Endothelial cell of umbilical vein (primary cell): ENCODE measurements at regions of chr20 and their contacts with region 1.

Region 1: DNA sequence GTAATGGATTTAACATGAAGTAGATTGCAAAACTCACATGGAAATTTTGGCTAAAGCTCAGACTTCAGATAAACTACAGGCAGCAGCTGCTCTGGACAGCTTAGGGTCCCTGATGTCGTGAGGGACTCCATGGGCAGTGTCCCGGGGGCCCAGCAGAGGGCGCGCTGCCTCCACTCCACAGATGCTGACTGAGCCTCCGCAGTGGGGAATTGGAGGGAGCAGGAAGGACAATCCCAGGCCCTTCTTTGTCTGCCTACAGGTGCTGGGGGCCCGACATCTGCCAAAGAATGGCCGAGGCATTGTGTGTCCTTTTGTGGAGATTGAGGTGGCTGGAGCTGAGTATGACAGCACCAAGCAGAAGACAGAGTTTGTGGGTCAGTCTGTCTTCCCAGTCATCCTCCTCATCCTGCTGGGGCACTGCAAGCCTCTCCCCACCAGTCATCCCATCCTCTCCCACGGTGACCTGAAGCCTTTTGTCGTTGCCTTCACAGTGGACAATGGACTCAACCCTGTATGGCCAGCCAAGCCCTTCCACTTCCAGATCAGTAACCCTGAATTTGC is 35.9 kb downstream of the PLCG1 start:
- DNase-seq: peak; percentile 70
- H3K4me3 ChIP-seq: no peak overlapping the region
- H3K27ac ChIP-seq: no peak overlapping the region
- H3K4me1 ChIP-seq: peaks cover 7% of the 10 kb centered on the region
- H3K27me3 ChIP-seq: no peaks in the 10 kb centered on the region
- CTCF ChIP-seq: peak; percentile 94 to 96
- POLR2A ChIP-seq: no peak

Region 2: DNA sequence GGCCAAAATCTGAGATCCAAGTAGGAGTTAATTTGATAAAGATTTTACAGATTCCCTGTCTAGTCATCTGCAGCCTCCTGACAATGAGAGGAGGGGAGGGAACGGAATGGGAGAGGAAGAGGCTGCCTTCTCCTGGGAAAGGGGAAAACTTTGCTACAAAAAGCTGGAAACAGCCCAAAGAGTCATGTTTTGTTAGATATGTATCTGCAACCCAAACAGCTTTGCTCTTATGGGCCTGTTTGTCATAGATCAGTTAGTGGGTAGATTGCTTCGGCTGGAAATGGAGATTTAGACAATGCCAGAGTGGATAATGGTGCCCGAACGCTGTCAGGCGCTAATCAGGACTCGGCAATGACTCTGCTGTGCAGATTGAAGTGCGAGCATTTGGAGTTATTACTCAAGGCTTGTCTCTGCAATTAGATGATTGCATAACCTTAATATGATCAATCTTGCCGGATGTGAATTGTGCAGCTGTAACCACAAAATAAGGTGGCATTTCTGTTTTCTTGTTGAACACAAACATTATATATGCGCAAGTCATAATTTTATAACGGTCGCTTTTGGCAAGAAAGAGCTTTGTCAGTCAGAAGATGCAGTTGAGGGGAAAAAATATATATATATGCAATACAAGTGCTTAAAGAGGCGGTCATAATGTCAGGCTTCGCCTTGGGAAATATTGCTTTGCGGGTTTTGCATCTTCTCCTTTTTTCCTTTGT is 391.8 kb before region 1 on chr20:
- CTCF ChIA-PET with region 1: no interaction called
- POLR2A ChIA-PET with region 1: no interaction called
- dilution Hi-C with region 1: no loop called
- intact Hi-C with region 1: no loop called
- DNase-seq: no peak
- H3K4me3 ChIP-seq: no peak overlapping the region
- H3K27ac ChIP-seq: no peak overlapping the region
- H3K4me1 ChIP-seq: no peaks in the 10 kb centered on the region
- H3K27me3 ChIP-seq: peaks cover 3 to 5% of the 10 kb centered on the region in 2 experiments
- CTCF ChIP-seq: no peak
- POLR2A ChIP-seq: no peak

Region 3: DNA sequence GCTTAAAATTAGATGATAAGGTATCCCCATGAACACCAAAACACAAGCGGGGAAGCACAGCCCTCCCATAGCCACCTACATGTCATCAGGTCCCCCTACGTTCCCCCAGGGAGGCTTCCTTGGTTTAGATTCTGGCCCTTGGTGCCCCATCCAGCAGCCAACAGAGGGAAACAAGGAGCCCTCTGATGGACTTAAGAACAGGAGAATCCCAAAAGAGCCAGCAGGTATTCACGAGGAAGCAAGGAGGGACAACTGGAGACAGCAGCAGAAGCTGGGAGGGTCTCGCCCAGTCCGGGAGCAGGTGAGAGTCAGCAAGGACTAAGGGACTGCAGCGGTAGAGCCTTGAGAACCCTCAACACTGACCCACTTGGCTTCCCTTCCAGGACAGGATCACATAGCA is 203.0 kb before region 1 on chr20:
- CTCF ChIA-PET with region 1: interaction called, 3 read pairs
- POLR2A ChIA-PET with region 1: no interaction called
- dilution Hi-C with region 1: no loop called
- intact Hi-C with region 1: loop called (anchors 1 kb)
- DNase-seq: no peak
- H3K4me3 ChIP-seq: no peak overlapping the region
- H3K27ac ChIP-seq: no peak overlapping the region
- H3K4me1 ChIP-seq: no peaks in the 10 kb centered on the region
- H3K27me3 ChIP-seq: no peaks in the 10 kb centered on the region
- CTCF ChIP-seq: peak in 1 of 2 donors; percentile 16
- POLR2A ChIP-seq: no peak

Region 4: DNA sequence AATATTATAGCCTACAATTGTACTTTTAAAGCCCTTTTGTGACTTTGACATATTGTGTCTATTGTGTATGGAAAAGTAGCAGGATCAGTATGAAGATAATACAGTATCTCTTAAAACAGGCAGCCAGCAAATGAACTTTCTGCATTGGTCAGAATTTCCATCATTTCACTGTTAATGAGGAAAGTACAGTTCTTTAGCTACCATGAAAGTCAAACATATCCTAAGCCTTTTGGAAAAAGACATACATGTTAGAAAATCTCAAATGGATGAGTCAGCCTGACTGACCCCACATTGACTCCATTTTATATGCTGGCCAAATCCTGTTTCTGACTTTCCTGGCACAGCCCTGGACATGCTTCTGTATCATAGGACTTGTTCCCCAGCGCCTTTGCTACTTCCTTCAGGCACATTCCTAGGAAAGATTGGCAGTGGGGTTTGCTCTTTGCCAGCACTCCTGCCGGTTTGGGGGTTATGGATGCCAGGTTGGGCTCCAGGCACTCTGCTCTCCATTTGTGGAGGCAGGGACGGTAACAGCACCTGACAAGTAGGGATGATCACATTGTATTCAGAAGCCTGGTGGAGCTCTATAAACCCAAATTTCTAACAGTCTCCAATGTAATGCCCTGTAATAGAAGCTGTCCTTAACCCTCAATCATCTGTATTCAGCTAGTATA is 100.9 kb before region 1 on chr20:
- CTCF ChIA-PET with region 1: no interaction called
- POLR2A ChIA-PET with region 1: no interaction called
- dilution Hi-C with region 1: no loop called
- intact Hi-C with region 1: no loop called
- DNase-seq: peak; percentile 93
- H3K4me3 ChIP-seq: peak overlapping the region in 1 of 3 experiments; percentile 30
- H3K27ac ChIP-seq: peak overlapping the region; percentile 83
- H3K4me1 ChIP-seq: peaks cover 68% of the 10 kb centered on the region
- H3K27me3 ChIP-seq: no peaks in the 10 kb centered on the region
- CTCF ChIP-seq: no peak
- POLR2A ChIP-seq: no peak

Region 5: DNA sequence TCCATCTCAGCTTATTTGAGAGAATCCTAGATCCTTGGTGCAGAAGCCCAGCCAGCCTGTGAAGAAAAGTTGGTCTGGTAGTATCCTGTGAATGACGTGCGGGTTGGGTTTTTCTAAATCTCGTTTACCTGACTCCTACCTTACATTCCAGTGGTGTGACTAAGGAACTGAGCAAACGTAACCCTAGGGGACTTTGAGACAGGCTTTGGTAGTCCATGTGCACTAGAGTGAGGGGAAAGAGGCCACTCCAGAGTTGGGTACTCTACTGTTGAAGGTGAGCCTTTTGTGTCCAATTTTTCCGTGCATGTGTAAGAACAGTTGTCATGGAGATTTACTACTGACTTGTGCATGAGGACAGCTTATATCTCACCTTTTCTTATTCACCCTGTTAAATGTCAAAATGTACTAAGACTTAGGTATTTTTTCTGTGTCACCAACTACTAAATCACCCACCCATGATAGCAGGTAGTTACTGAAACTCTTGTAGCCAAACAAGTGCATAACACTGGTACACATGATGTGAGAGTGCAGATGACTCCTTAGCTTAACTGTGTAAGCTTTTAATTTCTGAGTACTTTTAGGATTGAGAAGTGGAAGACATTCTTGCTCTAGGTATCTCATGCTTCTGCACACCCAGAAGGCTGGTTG is 62.2 kb before region 1 on chr20:
- CTCF ChIA-PET with region 1: no interaction called
- POLR2A ChIA-PET with region 1: no interaction called
- dilution Hi-C with region 1: no loop called
- intact Hi-C with region 1: no loop called
- DNase-seq: no peak
- H3K4me3 ChIP-seq: no peak overlapping the region
- H3K27ac ChIP-seq: no peak overlapping the region
- H3K4me1 ChIP-seq: no peaks in the 10 kb centered on the region
- H3K27me3 ChIP-seq: no peaks in the 10 kb centered on the region
- CTCF ChIP-seq: no peak
- POLR2A ChIP-seq: no peak

Region 6: DNA sequence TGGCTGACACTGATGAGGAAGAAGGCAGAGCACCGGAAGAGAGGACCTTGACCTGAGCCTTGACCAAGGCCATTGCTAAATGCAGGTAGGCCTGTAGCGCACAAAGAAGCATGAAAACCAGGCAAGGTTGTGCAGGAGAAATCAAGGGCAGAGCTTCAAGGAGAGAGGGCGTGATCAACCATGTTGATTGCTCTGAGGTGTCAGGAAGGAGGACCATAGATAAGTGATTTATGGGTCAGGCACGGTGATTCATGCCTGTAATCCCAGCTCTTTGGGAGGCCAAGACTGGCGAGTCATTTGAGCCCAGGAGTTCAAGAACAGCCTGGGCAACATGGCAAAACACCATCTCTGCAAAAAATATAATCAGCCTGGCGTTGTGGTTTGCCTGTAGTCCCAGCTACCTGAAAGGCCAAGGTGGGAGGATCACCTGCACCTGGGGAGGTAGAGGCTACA is 23.5 kb before region 1 on chr20:
- CTCF ChIA-PET with region 1: interaction called, 23 read pairs
- POLR2A ChIA-PET with region 1: no interaction called
- dilution Hi-C with region 1: no loop called
- intact Hi-C with region 1: no loop called
- DNase-seq: peak; percentile 40
- H3K4me3 ChIP-seq: no peak overlapping the region
- H3K27ac ChIP-seq: peak overlapping the region; percentile 96
- H3K4me1 ChIP-seq: peaks cover 86% of the 10 kb centered on the region
- H3K27me3 ChIP-seq: no peaks in the 10 kb centered on the region
- CTCF ChIP-seq: no peak
- POLR2A ChIP-seq: no peak

Region 7: DNA sequence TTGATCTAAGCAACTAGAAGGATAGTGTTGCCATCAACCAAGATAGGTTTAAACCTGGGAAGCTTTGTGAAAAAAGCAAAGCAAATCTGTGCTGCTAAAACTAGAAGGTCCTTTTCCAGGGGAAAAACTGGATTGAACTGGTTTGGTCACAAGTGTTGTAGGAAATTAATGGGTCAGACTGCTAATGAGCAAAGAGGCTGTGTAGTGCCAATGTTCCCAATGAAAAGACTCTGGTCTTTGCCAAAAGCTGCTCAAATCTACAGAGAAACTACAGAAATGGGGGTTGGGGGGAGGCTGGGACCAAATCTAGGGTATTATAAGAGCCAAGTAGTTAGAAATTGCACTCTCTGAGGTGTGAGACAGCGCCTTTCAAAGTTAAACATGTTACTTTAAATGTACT is 49.1 kb after region 1 on chr20:
- CTCF ChIA-PET with region 1: interaction called, 29 read pairs
- POLR2A ChIA-PET with region 1: no interaction called
- dilution Hi-C with region 1: no loop called
- intact Hi-C with region 1: no loop called
- DNase-seq: no peak
- H3K4me3 ChIP-seq: no peak overlapping the region
- H3K27ac ChIP-seq: no peak overlapping the region
- H3K4me1 ChIP-seq: no peaks in the 10 kb centered on the region
- H3K27me3 ChIP-seq: no peaks in the 10 kb centered on the region
- CTCF ChIP-seq: no peak
- POLR2A ChIP-seq: no peak

Region 8: DNA sequence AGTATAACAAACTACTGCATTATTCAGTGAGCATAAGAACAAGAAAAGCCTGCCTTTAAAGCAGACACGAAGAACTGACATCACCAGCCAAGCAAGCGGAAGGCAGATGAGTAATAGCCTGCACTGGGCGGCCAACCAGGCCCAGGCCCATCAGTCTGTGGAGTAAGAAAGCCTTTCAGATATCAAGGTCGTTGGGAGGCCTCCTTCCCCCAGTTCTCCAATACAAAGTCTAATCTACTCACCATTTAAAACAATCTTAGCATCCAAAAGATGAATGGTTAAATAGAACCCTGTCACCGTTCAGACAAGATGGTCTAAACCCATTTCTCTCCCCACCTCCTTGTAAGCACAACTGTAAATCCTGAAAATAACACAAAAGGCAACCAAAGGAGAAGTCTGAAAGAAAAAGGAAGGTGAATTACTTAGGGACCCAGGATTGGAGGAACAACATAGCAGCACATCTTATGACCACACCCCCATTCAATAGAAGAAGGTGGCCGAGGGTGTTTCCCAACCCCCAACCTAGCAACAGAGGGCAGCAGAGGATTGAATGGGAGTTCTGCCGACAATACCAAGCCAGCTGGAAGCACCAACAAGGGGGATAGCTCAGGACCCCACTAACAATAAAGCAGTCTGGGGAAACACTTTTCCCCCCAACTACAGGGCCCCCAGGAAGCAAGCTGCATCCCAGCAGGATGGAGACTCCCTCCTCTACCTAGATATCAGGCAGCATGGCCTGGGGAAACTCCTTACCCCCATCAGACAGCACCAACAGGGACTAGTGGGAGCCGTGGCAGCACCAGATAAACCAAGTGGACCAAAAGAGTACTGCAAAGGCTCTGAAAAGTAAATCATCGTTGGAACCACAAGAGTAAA is 76.4 kb after region 1 on chr20:
- CTCF ChIA-PET with region 1: interaction called, 11 read pairs
- POLR2A ChIA-PET with region 1: no interaction called
- dilution Hi-C with region 1: no loop called
- intact Hi-C with region 1: loop called (anchors 1 kb)
- DNase-seq: peak; percentile 92
- H3K4me3 ChIP-seq: peak overlapping the region in 1 of 3 experiments; percentile 63
- H3K27ac ChIP-seq: peak overlapping the region; percentile 99
- H3K4me1 ChIP-seq: peaks cover 67% of the 10 kb centered on the region
- H3K27me3 ChIP-seq: no peaks in the 10 kb centered on the region
- CTCF ChIP-seq: peak in 1 of 2 donors; percentile 34
- POLR2A ChIP-seq: peak; percentile 12

Region 9: DNA sequence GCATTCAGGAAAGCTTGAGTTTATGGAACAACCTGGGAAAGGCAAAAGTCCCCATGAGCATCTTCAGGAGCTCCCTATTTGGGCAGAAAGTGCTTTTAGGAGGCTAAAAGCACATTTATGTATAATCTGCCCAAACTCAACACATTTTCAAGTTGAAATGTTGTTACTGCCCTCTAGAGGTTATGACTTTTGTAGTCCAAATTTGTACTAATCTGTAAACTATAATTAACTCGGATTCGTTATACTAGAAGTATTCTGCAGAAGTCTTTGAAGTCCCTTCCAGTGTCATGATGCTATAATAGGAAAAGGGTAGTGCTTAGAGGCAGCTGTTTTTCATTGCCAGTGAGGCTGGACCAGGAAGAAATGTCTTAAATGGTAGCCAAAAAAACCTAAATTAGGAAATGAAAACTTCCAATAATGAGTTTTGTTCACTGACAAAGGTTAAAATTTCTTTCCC is 238.2 kb after region 1 on chr20:
- CTCF ChIA-PET with region 1: interaction called, 52 read pairs
- POLR2A ChIA-PET with region 1: no interaction called
- dilution Hi-C with region 1: no loop called
- intact Hi-C with region 1: loop called (anchors 1 kb)
- DNase-seq: peak; percentile 48
- H3K4me3 ChIP-seq: no peak overlapping the region
- H3K27ac ChIP-seq: no peak overlapping the region
- H3K4me1 ChIP-seq: no peaks in the 10 kb centered on the region
- H3K27me3 ChIP-seq: no peaks in the 10 kb centered on the region
- CTCF ChIP-seq: peak; percentile 12 to 19
- POLR2A ChIP-seq: no peak